ENCODE measurements at regions of chr5 and their contacts with region 1.

Region 1: GRCh38 chr5:149035372-149035790 is 27.5 kb downstream of the SH3TC2 start:
- DNase-seq: peak; percentile 64
- H3K4me3 ChIP-seq: no peak overlapping the region
- H3K27ac ChIP-seq: no peak overlapping the region
- H3K27me3 ChIP-seq: no peaks in the 10 kb centered on the region
- CTCF ChIP-seq: peak; percentile 95

Region 2: GRCh38 chr5:148443998-148444397 is 591.4 kb before region 1 on chr5:
- CTCF ChIA-PET with region 1: interaction called, 11 read pairs
- POLR2A ChIA-PET with region 1: no interaction called
- DNase-seq: peak; percentile 49
- H3K4me3 ChIP-seq: no peak overlapping the region
- H3K27ac ChIP-seq: no peak overlapping the region
- H3K27me3 ChIP-seq: no peaks in the 10 kb centered on the region
- CTCF ChIP-seq: peak; percentile 71

Region 3: GRCh38 chr5:148826053-148826738 is 209.2 kb before region 1 on chr5 and contains the start of gene ADRB2:
- CTCF ChIA-PET with region 1: interaction called, 30 read pairs
- POLR2A ChIA-PET with region 1: no interaction called
- DNase-seq: peak; percentile 79
- H3K4me3 ChIP-seq: peak within 1 kb of the TSS; percentile 85
- H3K27ac ChIP-seq: peak within 1 kb of the TSS; percentile 70
- H3K27me3 ChIP-seq: no peaks in the 10 kb centered on the region
- CTCF ChIP-seq: no peak
- polyA plus RNA-seq, gene ADRB2: 0.63 and 0.65 TPM in 2 replicates

Region 4: GRCh38 chr5:148998174-148998797 is 37.1 kb before region 1 on chr5:
- CTCF ChIA-PET with region 1: interaction called, 57 read pairs
- POLR2A ChIA-PET with region 1: interaction called, 9 read pairs
- DNase-seq: no peak
- H3K4me3 ChIP-seq: no peak overlapping the region
- H3K27ac ChIP-seq: no peak overlapping the region
- H3K27me3 ChIP-seq: no peaks in the 10 kb centered on the region
- CTCF ChIP-seq: peak; percentile 69

Region 5: DNA sequence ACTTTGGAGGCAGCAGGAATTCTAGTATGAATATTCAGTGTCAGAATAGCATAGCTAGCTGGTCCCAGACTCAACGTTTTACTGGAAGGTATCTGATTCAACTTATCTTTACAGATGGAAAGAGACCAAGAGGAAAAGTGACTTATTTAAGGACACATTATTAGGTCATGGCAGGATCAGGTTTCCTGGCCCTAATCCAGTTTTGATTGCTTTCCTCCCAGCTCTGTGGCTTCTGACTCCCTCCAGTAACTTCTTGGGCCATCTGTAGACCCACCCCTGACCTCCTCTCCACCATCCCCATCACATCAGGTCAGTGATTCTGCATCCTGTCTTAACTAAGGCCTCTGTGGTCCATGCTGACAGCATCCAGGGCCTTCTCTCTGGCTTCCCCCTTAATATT is 10.9 kb before region 1 on chr5:
- CTCF ChIA-PET with region 1: interaction called, 38 read pairs
- POLR2A ChIA-PET with region 1: interaction called, 7 read pairs
- DNase-seq: no peak
- H3K4me3 ChIP-seq: no peak overlapping the region
- H3K27ac ChIP-seq: no peak overlapping the region
- H3K27me3 ChIP-seq: no peaks in the 10 kb centered on the region
- CTCF ChIP-seq: no peak

Region 6: DNA sequence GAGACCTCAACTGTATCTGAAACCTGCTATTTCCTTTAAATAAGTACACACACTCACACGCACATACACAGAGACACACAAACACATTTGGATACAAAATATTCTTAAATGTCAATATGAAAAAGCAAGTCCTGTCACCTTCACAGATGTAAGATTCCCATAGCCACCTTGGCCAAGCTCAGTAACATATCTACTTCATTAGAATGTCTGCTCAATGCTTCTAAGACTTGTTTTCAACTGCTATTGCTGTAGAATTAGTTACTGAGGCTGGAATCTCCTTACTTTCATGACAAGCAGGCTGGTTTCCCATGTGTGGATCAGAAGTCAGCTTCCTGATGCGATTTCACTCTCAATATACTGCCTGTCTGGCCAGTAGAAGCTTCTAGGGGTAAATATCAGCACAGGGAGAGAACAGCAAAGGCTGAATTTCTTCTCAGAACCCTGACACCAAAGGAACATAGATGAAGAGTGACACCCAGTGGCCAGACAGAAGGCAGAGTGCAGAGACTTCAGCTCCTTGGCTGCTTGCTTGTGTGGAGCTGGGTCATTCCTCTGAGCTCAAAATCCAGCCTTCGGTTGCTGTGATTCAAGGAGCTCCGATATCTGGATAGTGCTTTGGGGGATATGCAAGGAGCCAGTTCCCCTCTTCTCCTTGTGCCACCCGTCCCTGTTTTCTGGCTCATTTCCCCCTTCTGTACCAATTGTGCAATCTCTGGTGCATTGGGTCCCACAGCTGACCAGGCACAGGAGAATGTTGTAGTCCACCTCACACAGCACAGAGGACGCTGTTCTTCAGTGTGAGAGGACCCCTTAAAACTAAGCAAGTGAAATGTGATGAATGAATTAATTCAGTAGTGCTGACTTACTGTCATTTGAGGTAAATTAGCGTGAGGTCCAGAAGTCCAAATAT is 79.3 kb after region 1 on chr5:
- CTCF ChIA-PET with region 1: interaction called, 122 read pairs
- POLR2A ChIA-PET with region 1: no interaction called
- DNase-seq: peak; percentile 69
- H3K4me3 ChIP-seq: no peak overlapping the region
- H3K27ac ChIP-seq: no peak overlapping the region
- H3K27me3 ChIP-seq: no peaks in the 10 kb centered on the region
- CTCF ChIP-seq: peak; percentile 87

Region 7: GRCh38 chr5:149526845-149527580 is 491.6 kb after region 1 on chr5:
- CTCF ChIA-PET with region 1: no interaction called
- POLR2A ChIA-PET with region 1: no interaction called
- DNase-seq: no peak
- H3K4me3 ChIP-seq: no peak overlapping the region
- H3K27ac ChIP-seq: no peak overlapping the region
- H3K27me3 ChIP-seq: no peaks in the 10 kb centered on the region
- CTCF ChIP-seq: no peak